ENCODE measurements at regions of chr15 and their contacts with region 1.

Region 1: DNA sequence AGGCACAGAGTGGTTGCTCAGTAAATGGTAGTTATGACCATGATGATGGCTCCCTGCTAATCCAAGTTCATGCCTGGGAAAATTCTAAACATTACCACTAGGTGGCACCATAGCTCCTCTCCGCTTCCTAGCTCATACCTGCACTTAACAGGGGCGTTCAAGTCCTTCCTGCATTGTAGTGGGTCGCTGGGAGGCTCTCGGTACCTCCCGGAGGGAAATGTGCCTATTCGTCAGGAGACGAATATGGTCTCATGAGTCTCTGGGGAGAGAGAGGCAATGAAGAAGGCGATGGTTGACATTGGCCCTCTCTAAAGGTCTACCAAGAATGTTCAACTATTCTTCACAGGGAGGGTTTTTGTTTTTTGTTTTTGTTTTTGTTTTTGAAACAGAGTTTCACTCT is 10.9 kb downstream of the MESP1 start:
- DNase-seq: peak; percentile 55
- H3K4me3 Mint-ChIP-seq: no peak overlapping the region
- H3K27ac Mint-ChIP-seq: no peak overlapping the region
- H3K4me1 Mint-ChIP-seq: peaks cover 1% of the 10 kb centered on the region
- H3K27me3 Mint-ChIP-seq: peaks cover 5% of the 10 kb centered on the region

Region 2: DNA sequence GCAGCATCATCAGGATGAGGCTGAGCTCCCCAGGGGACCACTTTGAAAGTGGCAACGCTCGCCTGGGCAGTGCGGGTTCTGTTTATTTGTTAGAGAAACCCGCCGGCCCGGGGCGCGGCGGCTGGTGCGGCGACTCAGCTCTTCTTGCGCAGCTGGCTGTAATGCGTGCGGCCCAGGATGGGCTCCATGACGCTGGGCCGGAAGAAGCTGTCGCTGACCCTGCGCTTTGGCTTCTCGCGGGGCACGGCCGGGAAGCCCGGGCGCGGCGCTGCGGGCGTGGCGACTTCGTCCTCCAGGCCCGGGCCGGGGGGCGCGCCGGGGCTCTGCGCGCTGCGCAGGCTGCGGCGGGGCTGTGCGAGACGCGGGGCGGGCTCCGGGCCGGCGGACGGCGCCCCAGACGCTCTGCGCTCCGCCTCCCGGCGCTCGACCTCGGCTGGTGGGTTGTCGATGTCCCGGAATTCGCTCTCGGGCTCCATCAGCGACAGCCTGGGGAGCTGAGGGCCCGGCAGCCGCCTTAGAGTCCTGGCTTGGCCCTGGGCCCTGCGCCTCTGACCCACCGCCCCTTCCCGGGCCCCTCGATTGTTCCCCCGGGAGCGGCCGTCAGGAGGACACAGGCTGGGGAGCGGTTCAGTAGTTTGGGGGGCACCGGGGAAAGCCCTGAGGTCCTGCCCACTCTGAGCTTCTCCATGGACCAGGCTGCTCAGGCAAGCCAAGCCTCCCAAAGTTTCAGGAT is 74.5 kb before region 1 on chr15:
- CTCF ChIA-PET with region 1: no interaction called
- POLR2A ChIA-PET with region 1: no interaction called
- DNase-seq: peak; percentile 34
- H3K4me3 Mint-ChIP-seq: peak overlapping the region; percentile 30
- H3K27ac Mint-ChIP-seq: no peak overlapping the region
- H3K4me1 Mint-ChIP-seq: peaks cover 4% of the 10 kb centered on the region
- H3K27me3 Mint-ChIP-seq: peaks cover 32% of the 10 kb centered on the region

Region 3: GRCh38 chr15:89728254-89728653 is 11.9 kb before region 1 on chr15:
- CTCF ChIA-PET with region 1: interaction called, 12 read pairs
- POLR2A ChIA-PET with region 1: no interaction called
- DNase-seq: no peak
- H3K4me3 Mint-ChIP-seq: no peak overlapping the region
- H3K27ac Mint-ChIP-seq: no peak overlapping the region
- H3K4me1 Mint-ChIP-seq: no peaks in the 10 kb centered on the region
- H3K27me3 Mint-ChIP-seq: peaks cover 13% of the 10 kb centered on the region